ENCODE measurements at regions of chr1 and their contacts with region 1.

Region 1: DNA sequence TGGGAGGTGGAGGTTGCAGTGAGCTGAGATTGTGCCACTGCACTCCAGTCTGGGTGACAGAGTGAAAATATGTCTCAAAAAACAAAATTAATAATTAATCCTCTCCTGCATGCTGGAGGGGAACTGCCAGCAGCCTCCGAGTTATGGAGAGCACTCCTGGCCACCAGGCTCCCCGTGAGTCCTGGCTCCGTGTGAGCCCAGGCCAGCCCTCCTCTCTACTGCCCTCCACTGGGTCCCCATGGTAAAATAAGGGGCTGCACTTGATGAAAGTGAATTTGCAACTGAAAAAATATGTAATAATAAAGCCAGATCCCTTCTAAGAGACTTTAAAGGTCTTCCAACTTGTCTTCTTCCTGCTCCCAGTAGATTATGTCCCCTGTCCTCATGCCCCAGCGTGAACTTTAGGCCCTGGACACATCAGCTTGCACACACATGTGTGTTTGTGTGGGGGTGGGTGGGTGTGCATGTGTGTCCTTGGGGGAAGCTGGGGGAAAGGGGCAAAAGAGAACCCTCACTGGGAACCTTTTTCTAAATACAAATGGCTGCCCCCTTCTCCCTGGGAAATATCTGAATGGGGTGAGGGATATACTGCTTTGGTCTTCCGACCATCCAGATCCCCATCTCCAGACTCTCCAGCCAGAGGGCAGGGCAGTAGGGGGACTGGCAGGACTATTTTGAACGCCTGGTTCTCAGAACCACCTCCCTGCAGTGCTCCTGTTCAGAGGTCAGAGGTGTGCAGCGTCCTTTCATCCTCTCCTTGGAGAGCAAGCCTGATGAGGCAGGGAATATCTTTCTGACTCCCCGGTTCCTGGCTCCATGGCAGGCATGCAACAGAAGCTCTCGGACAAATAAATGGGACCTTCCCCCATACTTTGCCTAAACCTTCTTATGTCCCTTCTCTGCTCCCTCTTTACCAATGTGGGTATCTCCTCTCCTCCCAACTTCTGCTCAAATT is 26.2 kb downstream of the NEK2 start:
- DNase-seq: peak in 8 of 42 donors; percentile 7 to 68 (median 30)

Region 2: DNA sequence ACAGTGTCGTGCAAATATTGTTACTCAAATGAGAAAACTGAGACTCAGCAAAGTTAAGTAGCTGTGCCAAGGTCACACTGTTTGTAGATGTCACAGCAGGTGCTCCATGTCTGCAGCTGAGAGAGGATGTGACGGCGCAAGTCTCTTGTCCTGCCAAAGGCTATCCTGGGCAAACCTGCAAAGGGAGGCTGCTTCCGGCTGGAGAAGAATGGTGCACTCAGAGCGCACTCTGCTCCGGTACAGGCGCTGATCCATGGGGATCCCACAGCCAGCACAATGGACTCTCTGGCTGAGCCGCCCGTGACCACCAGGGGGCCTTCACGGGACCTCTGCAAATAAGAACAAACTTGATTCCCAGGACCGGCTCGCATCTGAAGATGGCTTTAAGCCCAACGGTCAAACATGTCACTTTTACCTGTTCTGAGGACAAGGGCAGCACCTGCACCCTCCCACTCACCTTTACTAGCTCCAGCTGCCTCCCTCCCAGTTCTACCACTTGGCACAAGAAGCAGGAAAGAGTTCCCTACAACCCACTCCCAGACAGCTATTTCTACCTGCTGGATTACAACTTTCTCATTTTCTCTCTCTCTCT is 179.2 kb before region 1 on chr1:
- intact Hi-C with region 1: loop called (anchors 5 kb)
- DNase-seq: peak; percentile 47 to 89 (median 75)

Region 3: DNA sequence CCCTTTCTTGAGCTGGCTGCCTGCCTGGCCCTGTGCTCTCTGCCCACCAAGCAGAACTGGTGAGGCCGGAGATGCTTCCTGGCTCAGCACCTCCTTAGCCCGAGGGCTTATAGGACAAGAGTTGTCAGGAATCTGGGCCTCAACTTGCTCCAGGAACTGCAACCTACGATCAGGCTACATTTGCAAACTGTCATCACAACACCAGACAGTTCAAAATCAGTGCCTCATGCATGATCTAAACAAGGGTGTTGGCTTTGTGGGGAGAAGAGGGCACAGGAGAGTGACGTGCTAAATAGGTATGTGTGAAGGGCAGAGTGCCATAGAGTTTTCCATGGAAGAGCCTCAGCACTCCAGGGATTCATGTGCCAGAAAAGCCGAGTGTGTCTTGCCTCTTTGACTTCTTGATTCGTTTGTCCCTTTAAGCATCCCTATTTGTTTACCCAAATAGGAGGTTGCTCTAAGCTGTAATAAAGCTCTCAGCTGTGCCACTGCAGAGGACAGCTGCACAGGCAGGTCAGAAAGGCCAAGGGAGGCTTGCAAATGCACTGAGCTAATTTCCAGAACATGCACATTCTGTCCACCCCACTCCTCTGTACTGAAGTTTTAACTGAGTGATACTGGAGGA is 56.3 kb after region 1 on chr1:
- intact Hi-C with region 1: no loop called
- DNase-seq: no peak

Region 4: GRCh38 chr1:211896958-211897357 is 247.7 kb after region 1 on chr1:
- intact Hi-C with region 1: no loop called
- DNase-seq: no peak